ENCODE measurements at regions of chr18 and their contacts with region 1.

Region 1: DNA sequence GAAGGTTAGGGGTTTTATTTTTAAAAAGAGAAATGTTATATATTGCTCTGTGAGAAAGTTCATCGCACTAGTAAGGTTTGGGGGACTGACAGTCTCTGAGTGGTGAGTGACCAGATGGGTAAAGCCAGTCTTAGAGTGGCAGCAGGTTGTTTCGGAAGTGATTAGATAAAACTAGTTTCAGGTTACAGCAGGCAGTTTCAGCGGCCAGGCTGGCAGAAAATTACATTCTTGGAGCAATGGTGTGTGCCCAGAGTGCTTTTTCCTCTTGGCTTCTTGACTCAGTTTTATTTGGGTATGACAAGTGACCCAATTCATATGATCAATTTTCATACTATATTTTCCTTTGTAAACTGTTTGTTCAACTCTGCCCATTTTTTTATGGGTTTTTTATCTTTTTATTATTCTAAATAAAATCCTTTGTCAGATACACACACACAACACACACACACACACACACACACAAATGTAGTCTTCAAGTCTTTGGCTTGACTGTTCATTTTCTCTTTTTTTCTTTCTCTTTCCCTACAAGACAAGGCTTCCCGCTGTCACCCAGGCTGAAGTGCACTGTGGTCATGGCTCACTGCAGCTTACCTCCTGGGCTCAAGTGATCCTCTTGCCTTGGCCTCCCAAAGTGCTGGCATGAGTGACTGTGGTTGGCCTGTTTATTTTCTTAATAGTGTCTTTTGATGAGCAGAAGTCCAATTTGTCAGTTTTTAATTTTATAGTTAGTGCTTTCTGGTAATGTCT is 30.9 kb downstream of the RALBP1 start:
- DNase-seq: peak; percentile 7
- ATAC-seq: no peak
- H3K4me3 Mint-ChIP-seq: no peak overlapping the region
- H3K27ac Mint-ChIP-seq: no peak overlapping the region
- H3K4me1 Mint-ChIP-seq: peaks cover 18% of the 10 kb centered on the region
- H3K27me3 Mint-ChIP-seq: no peaks in the 10 kb centered on the region

Region 2: DNA sequence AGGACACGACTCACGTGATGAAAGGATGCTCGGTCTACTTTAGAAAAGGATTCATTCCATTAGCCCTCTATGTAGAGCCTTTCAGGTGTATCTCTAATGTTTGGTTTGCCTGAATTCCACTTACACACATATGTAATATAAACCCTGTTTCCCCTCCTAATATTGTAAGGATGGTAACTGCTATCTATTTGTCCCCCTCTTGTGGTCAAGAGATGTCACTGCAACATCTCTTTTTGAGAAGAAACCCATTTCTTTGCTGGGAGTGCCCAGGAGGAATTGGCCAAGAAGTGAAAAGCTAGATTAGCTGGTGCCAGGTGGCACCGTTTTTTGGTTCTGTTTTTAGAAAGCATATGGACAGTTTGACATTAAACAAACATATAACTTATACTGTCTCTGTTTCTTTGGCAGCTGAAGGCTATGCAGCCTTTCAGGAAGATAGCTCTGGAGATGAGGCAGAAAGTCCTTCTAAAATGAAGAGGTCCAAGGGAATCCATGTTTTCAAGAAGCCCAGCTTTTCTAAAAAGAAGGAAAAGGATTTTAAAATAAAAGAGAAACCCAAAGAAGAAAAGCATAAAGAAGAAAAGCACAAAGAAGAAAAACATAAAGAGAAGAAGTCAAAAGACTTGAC is 10.3 kb after region 1 on chr18:
- CTCF ChIA-PET with region 1: interaction called, 12 read pairs
- POLR2A ChIA-PET with region 1: no interaction called
- intact Hi-C with region 1: no loop called
- DNase-seq: peak; percentile 10
- ATAC-seq: peak; percentile 47
- H3K4me3 Mint-ChIP-seq: no peak overlapping the region
- H3K27ac Mint-ChIP-seq: no peak overlapping the region
- H3K4me1 Mint-ChIP-seq: peaks cover 2% of the 10 kb centered on the region
- H3K27me3 Mint-ChIP-seq: no peaks in the 10 kb centered on the region

Measured in activated CD4-positive, alpha-beta T cell treated with anti-CD3 and anti-CD28 coated beads for 36 hours (primary cell).